Endothelial cell of umbilical vein (primary cell): ENCODE measurements at regions of chr4 and their contacts with region 1.

Region 1: GRCh38 chr4:5824635-5825034 is 68.3 kb downstream of the CRMP1 start:
- DNase-seq: peak; percentile 58
- H3K4me3 ChIP-seq: no peak overlapping the region
- H3K27ac ChIP-seq: no peak overlapping the region
- H3K4me1 ChIP-seq: peaks cover 23% of the 10 kb centered on the region
- H3K27me3 ChIP-seq: no peaks in the 10 kb centered on the region
- CTCF ChIP-seq: peak; percentile 58 to 70
- POLR2A ChIP-seq: peak; percentile 9

Region 2: GRCh38 chr4:5812506-5813229 is 12.0 kb before region 1 on chr4:
- CTCF ChIA-PET with region 1: interaction called, 25 read pairs
- POLR2A ChIA-PET with region 1: no interaction called
- dilution Hi-C with region 1: no loop called
- intact Hi-C with region 1: no loop called
- DNase-seq: peak; percentile 36
- H3K4me3 ChIP-seq: no peak overlapping the region
- H3K27ac ChIP-seq: no peak overlapping the region
- H3K4me1 ChIP-seq: no peaks in the 10 kb centered on the region
- H3K27me3 ChIP-seq: no peaks in the 10 kb centered on the region
- CTCF ChIP-seq: peak; percentile 41 to 58
- POLR2A ChIP-seq: no peak

Region 3: DNA sequence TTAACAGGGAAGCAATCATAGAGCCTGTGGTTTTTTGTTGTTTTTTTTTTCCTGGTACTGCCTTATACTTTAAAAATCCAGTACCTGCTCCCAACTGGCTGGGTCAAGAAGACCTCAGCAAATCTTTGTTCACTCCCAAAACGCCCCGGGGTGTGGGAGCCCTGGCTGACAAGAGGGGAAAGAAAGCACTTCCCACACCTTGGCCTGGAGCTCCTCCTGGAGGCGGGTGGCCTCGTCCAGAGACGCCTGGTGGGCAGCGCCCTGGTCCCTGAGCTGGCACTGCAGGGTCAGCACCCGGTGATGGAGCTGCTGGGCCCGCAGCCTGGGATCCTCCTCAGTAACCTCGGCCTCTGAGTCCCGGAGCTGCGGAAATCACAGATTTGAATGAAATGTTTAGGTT is 155.3 kb after region 1 on chr4:
- CTCF ChIA-PET with region 1: interaction called, 5 read pairs
- POLR2A ChIA-PET with region 1: no interaction called
- dilution Hi-C with region 1: no loop called
- intact Hi-C with region 1: loop called (anchors 2 kb)
- DNase-seq: no peak
- H3K4me3 ChIP-seq: no peak overlapping the region
- H3K27ac ChIP-seq: no peak overlapping the region
- H3K4me1 ChIP-seq: no peaks in the 10 kb centered on the region
- H3K27me3 ChIP-seq: no peaks in the 10 kb centered on the region
- CTCF ChIP-seq: peak in 1 of 2 donors; percentile 22
- POLR2A ChIP-seq: no peak